ENCODE measurements at regions of chr1 and their contacts with region 1.

Region 1: GRCh38 chr1:3910857-3911845 is 11.1 kb upstream of the C1orf174 start:
- DNase-seq: no peak
- ATAC-seq: peak; percentile 91
- H3K4me3 ChIP-seq: peak overlapping the region in 1 of 2 experiments; percentile 16; a peak in 1 of 4 replicates
- H3K27ac ChIP-seq: no peak overlapping the region
- H3K4me1 ChIP-seq: peaks cover 6% of the 10 kb centered on the region; the same call in 1 of the 2 replicates
- H3K27me3 ChIP-seq: no peaks in the 10 kb centered on the region
- CTCF ChIP-seq: peak; percentile 91

Region 2: GRCh38 chr1:4055294-4055967 is 144.3 kb after region 1 on chr1:
- CTCF ChIA-PET with region 1: no interaction called
- POLR2A ChIA-PET with region 1: no interaction called
- in situ Hi-C with region 1: no loop called
- intact Hi-C with region 1: loop called (anchors 10 kb)
- DNase-seq: no peak
- ATAC-seq: no peak
- H3K4me3 ChIP-seq: no peak overlapping the region
- H3K27ac ChIP-seq: no peak overlapping the region
- H3K4me1 ChIP-seq: no peaks in the 10 kb centered on the region
- H3K27me3 ChIP-seq: no peaks in the 10 kb centered on the region
- CTCF ChIP-seq: no peak

Region 3: GRCh38 chr1:5151511-5151910 is 1240.4 kb after region 1 on chr1:
- CTCF ChIA-PET with region 1: no interaction called
- POLR2A ChIA-PET with region 1: no interaction called
- in situ Hi-C with region 1: no loop called
- intact Hi-C with region 1: no loop called
- DNase-seq: no peak
- ATAC-seq: no peak
- H3K4me3 ChIP-seq: no peak overlapping the region
- H3K27ac ChIP-seq: no peak overlapping the region
- H3K4me1 ChIP-seq: no peaks in the 10 kb centered on the region
- H3K27me3 ChIP-seq: no peaks in the 10 kb centered on the region
- CTCF ChIP-seq: no peak